ENCODE measurements at regions of chr3 and their contacts with region 1.

Region 1: DNA sequence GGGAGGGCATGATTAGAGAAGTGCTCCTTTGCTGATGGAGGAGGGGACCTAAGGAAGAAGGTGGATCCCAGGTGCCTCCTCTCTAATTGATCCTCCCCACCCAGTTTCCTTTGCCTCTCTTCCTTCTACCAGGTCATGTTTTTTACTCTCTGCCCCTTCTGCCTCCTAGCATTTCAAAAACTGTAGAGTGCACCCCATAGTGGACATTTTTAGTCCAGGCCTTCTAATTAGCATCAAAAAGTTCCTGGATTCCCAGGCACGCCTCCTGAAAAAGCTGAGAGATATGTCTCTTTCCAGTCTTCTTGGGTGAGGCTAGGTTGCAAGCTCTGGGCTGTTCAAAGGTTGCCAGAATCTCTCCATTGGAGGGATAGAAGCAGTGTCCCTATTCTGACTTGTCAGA is 18.7 kb upstream of the ITGB5 start:
- DNase-seq: no peak
- CTCF ChIP-seq: no peak

Region 2: DNA sequence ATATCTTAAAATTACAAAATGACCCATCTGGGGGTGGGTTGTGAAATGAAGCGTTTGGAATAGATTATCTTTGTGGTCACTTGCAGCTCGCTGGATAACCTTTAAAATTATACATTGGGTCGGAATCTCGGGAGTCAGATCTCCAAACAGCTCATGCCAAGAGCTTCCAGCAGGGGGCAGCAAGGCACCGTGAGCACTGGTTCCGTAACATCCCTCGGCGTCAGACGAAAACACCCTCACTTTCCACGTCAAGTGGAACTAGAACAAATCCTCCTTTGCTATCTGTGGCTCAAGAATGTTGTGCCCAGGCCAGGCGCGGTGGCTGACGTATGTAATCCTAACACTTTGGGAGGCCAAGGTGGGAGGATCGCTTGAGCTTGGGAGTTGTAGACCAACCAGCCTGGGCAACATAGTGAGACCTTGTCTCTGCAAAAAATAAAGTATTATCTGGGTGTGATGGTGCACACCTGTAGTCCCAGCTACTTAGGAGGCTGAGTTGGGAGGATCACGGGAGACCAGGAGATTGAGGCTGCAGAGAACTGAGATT is 144.5 kb before region 1 on chr3:
- CTCF ChIA-PET with region 1: interaction called, 215 read pairs
- POLR2A ChIA-PET with region 1: interaction called, 3 read pairs
- DNase-seq: peak; percentile 81
- CTCF ChIP-seq: peak; percentile 89

Region 3: DNA sequence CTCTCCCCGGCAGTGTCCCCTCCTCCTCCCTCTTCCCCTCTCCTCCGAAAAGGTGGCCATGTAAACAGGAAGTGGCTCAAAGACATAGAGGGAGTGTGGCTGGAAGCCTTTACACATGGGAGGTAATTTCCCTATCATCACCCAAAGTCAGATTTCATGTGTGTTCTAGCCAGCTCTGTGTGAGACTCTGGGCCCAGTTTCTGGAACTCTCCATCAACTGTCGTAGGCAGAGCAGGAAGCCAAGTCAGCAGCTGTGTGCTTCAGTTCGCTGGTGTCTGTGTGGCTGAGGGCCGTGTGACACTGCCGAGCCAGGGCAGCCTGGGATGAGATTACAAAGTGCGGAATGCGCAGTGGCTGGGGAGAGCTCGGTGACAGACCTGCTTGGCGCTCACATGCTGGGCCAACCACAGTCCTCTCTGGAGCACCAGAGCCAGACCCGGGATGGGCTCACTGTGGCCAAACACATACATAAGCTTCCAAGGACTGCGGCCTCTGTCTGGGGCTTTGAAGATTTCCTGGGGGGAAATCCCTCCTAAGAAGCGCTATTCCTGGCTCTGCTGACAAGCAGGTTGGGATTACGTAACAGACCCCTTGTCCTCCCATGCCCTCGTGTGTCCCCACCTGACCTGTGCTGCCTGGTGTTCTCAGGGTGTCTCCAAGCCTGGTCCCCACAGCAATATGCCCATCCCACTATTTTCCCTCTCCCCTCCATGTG is 124.9 kb before region 1 on chr3:
- CTCF ChIA-PET with region 1: interaction called, 42 read pairs
- POLR2A ChIA-PET with region 1: no interaction called
- DNase-seq: no peak
- CTCF ChIP-seq: no peak

Region 4: DNA sequence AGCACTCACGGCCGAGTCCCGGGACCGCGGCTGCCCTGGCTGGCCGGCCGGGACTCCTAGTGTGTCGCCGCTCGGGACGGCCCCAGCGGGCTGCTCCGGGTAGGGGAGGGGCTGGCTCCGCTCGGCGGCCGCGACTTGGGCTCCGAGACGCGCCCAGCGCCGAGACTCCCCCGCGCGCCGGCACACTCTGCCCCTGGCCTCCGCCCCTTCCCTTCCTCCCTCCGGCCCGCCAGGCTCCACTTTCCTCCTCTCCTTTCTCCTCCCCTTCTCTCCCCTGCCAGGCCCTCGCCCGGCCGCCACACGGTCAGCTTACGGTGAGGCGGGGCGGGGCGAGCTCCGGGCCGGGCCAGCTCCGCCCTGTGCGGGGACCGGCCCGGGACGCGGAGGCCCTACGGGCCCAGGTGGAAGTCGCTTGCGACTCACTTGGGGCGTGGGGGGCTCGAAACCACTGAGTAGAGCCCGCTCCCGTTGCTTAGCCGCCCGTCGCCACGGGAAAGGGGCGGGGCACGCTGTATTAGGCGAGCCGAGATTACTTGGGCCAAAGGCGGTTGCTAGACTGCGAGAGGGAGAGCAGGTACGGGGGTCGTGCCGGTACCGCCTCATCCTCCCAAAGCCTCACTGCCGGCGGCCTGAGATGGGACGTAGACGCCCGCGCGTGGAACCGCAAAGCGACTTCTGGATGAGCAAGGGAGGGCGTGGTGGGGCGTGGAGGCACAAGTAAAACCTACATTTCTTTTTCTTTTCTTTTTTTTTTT is 18.5 kb before region 1 on chr3 and contains the start of gene ITGB5:
- CTCF ChIA-PET with region 1: interaction called, 51 read pairs
- POLR2A ChIA-PET with region 1: no interaction called
- DNase-seq: peak; percentile 64
- CTCF ChIP-seq: no peak

Region 5: DNA sequence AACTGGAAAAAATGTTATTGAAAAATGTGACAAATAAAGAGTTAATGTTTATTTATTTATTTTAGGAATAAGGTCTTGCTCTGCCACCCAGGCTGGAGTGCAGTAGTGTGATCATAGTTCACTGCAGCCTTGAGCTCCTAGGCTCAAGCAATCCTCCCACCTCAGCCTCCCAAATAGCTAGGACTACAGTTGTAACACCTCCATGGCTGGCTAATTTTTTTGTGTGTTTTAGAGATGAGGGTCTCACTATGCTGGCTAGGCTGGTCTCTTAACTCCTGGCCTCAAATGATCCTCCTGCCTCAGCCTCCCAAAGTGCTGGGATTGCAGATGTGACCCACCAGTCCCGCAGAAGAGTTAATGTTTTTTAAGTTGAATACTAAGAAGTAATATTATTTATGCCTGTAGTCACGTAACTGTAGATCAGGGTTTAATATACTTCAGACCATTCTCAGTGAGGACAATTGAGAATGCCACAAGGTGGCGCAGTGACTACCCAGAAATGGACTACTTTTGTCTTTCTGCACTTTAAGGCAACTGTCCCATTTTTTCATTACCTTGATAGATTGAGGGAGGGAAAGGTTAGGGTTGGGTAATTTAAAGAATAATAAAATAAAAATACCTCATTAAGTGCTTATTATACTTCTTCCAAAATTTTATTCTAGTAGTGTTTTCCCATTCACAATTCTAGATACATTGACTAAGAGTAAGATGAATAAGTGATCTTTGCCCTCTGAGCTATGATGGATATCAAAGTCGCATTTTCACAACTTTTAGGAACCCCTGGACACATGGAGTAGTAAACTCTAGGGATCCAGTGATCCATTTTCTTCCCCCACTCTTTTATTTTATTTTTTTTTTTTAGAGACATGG is 22.7 kb after region 1 on chr3:
- CTCF ChIA-PET with region 1: interaction called, 10 read pairs
- POLR2A ChIA-PET with region 1: no interaction called
- DNase-seq: peak; percentile 42
- CTCF ChIP-seq: peak; percentile 66

Region 6: GRCh38 chr3:124962403-124962940 is 56.6 kb after region 1 on chr3:
- CTCF ChIA-PET with region 1: no interaction called
- POLR2A ChIA-PET with region 1: no interaction called
- DNase-seq: no peak
- CTCF ChIP-seq: no peak

Region 7: DNA sequence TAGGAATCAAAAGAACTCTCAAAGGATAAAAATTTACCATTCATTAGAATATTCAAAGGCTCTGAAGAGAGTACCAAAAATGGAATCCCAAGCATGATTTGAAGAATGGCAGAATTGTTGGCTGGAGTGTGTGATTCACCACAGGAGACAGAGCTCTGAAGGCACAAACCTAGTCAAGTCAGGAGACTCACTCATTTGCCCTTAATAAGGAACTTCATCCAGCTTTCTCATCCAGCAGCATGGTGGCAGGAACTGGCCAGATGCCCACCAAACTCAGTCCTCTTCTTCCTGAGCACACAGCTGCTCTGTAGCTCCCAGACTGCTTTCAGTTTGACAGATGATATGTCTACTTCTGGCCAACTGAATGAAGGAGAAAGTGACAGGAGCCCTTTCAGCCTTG is 166.5 kb after region 1 on chr3:
- CTCF ChIA-PET with region 1: no interaction called
- POLR2A ChIA-PET with region 1: no interaction called
- DNase-seq: no peak
- CTCF ChIP-seq: no peak

Measured in GM10248 (cell line).